ENCODE measurements at regions of chr2 and their contacts with region 1.

Region 1: GRCh38 chr2:163171786-163172531 is 333.4 kb upstream of the KCNH7 start:
- DNase-seq: no peak
- ATAC-seq: no peak
- H3K4me3 ChIP-seq: no peak overlapping the region
- H3K27ac ChIP-seq: no peak overlapping the region
- H3K4me1 ChIP-seq: no peaks in the 10 kb centered on the region
- H3K27me3 ChIP-seq: no peaks in the 10 kb centered on the region
- CTCF ChIP-seq: no peak
- EP300 ChIP-seq: no peak
- POLR2A ChIP-seq: no peak
- RAD21 ChIP-seq: no peak

Region 2: DNA sequence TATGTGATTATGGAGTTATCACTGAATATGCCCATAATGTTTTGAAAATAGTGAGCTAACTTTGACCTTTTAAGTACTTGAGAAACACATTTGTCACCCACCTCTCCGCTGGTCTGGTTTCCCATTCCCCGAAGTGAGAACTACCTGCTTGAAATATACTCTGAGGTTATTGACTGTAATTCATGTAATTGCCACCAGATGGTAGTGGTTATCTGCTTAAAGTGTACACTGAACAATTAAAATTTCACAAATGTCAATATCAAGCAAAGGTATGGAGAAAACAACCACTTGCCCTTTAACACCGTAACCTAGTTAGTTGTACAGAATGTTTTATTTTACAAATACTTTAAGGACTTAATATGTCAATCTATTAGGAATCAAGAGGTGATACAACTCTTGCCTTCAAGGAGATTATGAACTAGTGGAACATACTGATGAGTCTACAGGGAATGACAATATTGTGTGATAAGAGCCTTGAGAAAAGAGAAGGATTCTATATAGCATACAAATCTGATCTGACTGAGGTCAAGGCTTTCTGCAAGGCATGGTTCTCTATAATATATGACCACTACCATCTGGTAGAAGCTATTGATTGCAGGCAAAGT is 16.6 kb before region 1 on chr2:
- CTCF ChIA-PET with region 1: interaction called, 48 read pairs
- POLR2A ChIA-PET with region 1: no interaction called
- RAD21 ChIA-PET with region 1: no interaction called
- SMC1A ChIA-PET with region 1: interaction called, 4 read pairs
- in situ Hi-C with region 1: no loop called
- intact Hi-C with region 1: no loop called
- DNase-seq: peak; percentile 3
- ATAC-seq: peak; percentile 84
- H3K4me3 ChIP-seq: no peak overlapping the region
- H3K27ac ChIP-seq: no peak overlapping the region
- H3K4me1 ChIP-seq: no peaks in the 10 kb centered on the region
- H3K27me3 ChIP-seq: no peaks in the 10 kb centered on the region
- CTCF ChIP-seq: peak; percentile 32 to 57 (median 55); a peak in 5 of 6 replicates
- EP300 ChIP-seq: no peak
- POLR2A ChIP-seq: no peak
- RAD21 ChIP-seq: peak; percentile 56

Region 3: GRCh38 chr2:163182764-163183354 is 10.9 kb after region 1 on chr2:
- CTCF ChIA-PET with region 1: interaction called, 62 read pairs
- POLR2A ChIA-PET with region 1: no interaction called
- RAD21 ChIA-PET with region 1: interaction called, 12 read pairs
- SMC1A ChIA-PET with region 1: interaction called, 22 read pairs
- in situ Hi-C with region 1: no loop called
- intact Hi-C with region 1: no loop called
- DNase-seq: no peak
- ATAC-seq: peak; percentile 51; the same call in 2 of the 3 replicates
- H3K4me3 ChIP-seq: no peak overlapping the region
- H3K27ac ChIP-seq: no peak overlapping the region
- H3K4me1 ChIP-seq: no peaks in the 10 kb centered on the region
- H3K27me3 ChIP-seq: no peaks in the 10 kb centered on the region
- CTCF ChIP-seq: peak; percentile 36 to 55 (median 45); a peak in 4 of 6 replicates
- EP300 ChIP-seq: no peak
- POLR2A ChIP-seq: no peak
- RAD21 ChIP-seq: peak; percentile 37

Region 4: DNA sequence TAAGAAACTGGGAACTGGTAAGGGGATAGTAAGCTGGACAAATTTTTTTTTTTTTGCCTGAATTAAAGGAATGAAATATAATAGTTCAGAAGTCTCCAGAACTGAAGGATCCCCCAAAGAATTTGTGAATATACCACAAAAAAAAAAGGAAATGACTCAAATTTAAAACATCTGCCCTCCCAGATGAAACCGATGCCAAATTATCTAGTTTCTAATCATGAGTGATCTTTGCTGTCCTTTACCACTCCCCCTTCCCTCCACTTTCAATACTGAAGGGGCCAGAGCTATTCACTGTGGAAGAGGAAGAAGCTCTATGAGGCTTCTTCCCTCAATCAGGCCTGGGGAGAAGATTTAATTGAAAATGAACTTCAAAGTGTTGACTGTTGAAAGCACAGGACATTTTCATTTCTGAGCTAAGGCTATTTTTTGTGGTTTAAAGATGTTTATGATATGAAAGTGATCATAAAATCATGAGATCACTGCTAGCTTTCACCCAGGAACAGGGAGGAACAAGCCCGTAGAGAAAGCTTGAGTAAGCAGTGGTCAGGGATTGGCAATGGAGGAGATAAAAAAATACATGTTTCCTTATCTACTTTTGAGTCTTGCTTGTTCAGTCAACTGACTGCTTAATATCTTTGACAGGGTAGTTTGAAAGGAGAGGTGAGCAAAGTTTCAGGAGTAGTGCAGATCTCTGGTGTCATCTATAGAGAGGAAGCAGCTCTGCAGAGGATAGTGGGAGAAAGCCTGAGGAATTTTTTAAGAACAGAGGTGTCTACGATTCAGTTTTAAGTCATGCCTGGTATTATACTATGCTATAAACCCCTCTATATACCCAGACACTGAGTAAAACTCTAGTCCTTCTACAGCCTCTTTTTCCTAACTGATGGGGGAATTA is 973.4 kb after region 1 on chr2:
- CTCF ChIA-PET with region 1: no interaction called
- POLR2A ChIA-PET with region 1: no interaction called
- RAD21 ChIA-PET with region 1: no interaction called
- SMC1A ChIA-PET with region 1: no interaction called
- in situ Hi-C with region 1: no loop called
- intact Hi-C with region 1: no loop called
- DNase-seq: no peak
- ATAC-seq: no peak
- H3K4me3 ChIP-seq: no peak overlapping the region
- H3K27ac ChIP-seq: no peak overlapping the region
- H3K4me1 ChIP-seq: no peaks in the 10 kb centered on the region
- H3K27me3 ChIP-seq: no peaks in the 10 kb centered on the region
- CTCF ChIP-seq: no peak
- EP300 ChIP-seq: no peak
- POLR2A ChIP-seq: no peak
- RAD21 ChIP-seq: no peak

Region 5: GRCh38 chr2:164717000-164717803 is 1545.2 kb after region 1 on chr2:
- CTCF ChIA-PET with region 1: interaction called, 3 read pairs
- POLR2A ChIA-PET with region 1: no interaction called
- RAD21 ChIA-PET with region 1: no interaction called
- SMC1A ChIA-PET with region 1: no interaction called
- in situ Hi-C with region 1: no loop called
- intact Hi-C with region 1: loop called (anchors 10 kb)
- DNase-seq: no peak
- ATAC-seq: no peak
- H3K4me3 ChIP-seq: no peak overlapping the region
- H3K27ac ChIP-seq: no peak overlapping the region
- H3K4me1 ChIP-seq: no peaks in the 10 kb centered on the region
- H3K27me3 ChIP-seq: no peaks in the 10 kb centered on the region; a peak in 1 of 4 replicates
- CTCF ChIP-seq: peak; percentile 19 to 45 (median 44); a peak in 3 of 6 replicates
- EP300 ChIP-seq: no peak
- POLR2A ChIP-seq: no peak
- RAD21 ChIP-seq: peak; percentile 25; the same call in 1 of the 2 replicates

Measured in GM12878 (cell line).